ENCODE measurements at regions of chrX and their contacts with region 1.

Region 1: DNA sequence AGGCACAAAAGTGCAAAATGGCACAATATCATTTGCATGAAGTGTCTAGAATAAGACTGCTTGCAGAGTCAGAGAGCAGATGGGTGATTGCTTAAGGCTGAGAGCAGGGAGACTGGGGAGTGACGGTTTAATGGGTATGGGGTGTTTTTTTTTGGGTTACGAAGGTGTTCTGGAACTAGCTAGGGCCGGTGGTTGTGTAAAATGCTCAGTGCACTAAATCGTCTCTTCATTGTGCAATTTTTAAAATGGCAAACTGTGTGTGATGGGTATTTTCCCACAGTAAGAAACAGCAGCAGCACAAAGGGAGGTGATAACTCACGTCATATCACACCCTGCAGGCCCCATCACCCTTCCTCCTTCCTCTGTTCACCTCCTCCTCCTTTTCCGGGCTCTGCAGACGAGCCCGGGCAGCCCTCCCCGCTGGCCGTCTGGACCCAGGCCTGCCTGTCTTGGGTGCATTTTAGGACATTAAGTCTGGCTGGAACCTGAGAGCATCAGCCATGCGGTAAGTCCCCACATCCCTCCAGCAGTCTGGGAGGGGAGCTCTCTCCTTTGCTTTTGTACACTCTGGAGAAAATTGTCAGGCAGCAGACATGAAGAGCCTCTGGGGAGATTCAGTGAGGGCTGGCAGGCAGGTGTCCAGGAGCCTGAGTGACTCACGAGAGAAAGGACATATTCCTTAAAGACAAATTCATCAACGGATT is 42.7 kb downstream of the ASMT start:
- DNase-seq: no peak
- ATAC-seq: no peak
- H3K4me3 ChIP-seq: no peak overlapping the region
- H3K27ac ChIP-seq: no peak overlapping the region
- H3K4me1 ChIP-seq: no peaks in the 10 kb centered on the region
- H3K27me3 ChIP-seq: no peaks in the 10 kb centered on the region
- CTCF ChIP-seq: no peak
- POLR2A ChIP-seq: no peak

Region 2: DNA sequence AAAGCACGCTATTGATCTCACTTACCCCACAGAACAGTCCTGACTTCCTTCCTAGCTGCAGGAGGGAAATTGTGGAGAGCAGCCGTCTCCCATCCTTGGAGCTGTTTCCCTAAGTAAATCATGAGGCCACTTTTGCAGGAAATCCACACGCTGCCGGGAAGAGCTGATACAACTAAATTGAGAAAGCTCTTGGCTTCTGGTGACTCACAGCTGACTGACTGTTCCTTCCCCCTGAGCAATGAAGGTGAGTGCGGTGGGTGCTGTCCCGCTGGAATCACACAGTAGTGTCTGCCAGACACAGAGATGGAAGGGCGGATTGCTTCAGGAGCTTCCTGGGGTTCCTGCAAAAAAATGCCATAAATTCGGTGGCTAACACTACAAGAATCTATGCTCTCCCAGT is 226.3 kb after region 1 on chrX:
- in situ Hi-C with region 1: no loop called
- intact Hi-C with region 1: no loop called
- DNase-seq: no peak
- ATAC-seq: no peak
- H3K4me3 ChIP-seq: no peak overlapping the region
- H3K27ac ChIP-seq: no peak overlapping the region
- H3K4me1 ChIP-seq: no peaks in the 10 kb centered on the region
- H3K27me3 ChIP-seq: no peaks in the 10 kb centered on the region
- CTCF ChIP-seq: no peak
- POLR2A ChIP-seq: no peak

Region 3: GRCh38 chrX:2577844-2578506 is 920.5 kb after region 1 on chrX:
- in situ Hi-C with region 1: loop called in 2 of 4 experiments (anchors 25 kb)
- intact Hi-C with region 1: no loop called
- DNase-seq: no peak
- ATAC-seq: no peak
- H3K4me3 ChIP-seq: no peak overlapping the region
- H3K27ac ChIP-seq: no peak overlapping the region
- H3K4me1 ChIP-seq: no peaks in the 10 kb centered on the region
- H3K27me3 ChIP-seq: peaks cover 14 to 26% (median 15%) of the 10 kb centered on the region in 3 donors
- CTCF ChIP-seq: no peak
- POLR2A ChIP-seq: no peak

Region 4: GRCh38 chrX:2595258-2595657 is 937.7 kb after region 1 on chrX:
- in situ Hi-C with region 1: loop called in 2 of 4 experiments (anchors 25 kb)
- intact Hi-C with region 1: loop called (anchors 2 kb)
- DNase-seq: no peak
- ATAC-seq: peak in 1 of 2 donors; percentile 60
- H3K4me3 ChIP-seq: no peak overlapping the region
- H3K27ac ChIP-seq: no peak overlapping the region
- H3K4me1 ChIP-seq: no peaks in the 10 kb centered on the region
- H3K27me3 ChIP-seq: no peaks in the 10 kb centered on the region
- CTCF ChIP-seq: no peak
- POLR2A ChIP-seq: no peak

Measured in gastrocnemius medialis (tissue), 4 donors.